A673 (cell line): ENCODE measurements at regions of chr3 and their contacts with region 1.

Region 1: DNA sequence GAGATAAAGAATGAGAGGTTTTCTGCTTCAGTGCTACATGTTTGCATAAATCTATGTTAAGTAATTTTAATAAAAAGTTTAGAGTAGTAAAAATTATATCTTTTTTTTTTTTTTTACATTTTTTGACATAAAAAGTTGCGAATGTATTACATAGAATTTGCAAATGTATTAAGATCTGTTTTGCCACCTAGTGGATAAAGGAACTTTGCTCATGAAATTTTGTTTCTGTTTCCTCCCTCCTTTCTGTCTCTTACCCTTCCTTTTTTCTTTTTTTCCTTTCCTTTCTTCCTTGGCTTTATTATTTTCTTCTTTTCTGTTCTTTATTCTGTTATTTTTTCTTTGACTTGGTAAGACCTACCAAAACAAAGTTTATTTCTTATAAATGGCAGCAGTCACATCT is 58.5 kb upstream of the UTS2B start:
- DNase-seq: no peak
- H3K4me3 ChIP-seq: no peak overlapping the region
- H3K27ac ChIP-seq: no peak overlapping the region
- H3K4me1 ChIP-seq: peaks cover 13% of the 10 kb centered on the region
- H3K27me3 ChIP-seq: no peaks in the 10 kb centered on the region
- CTCF ChIP-seq: peak; percentile 48; the same call in 1 of the 2 replicates

Region 2: DNA sequence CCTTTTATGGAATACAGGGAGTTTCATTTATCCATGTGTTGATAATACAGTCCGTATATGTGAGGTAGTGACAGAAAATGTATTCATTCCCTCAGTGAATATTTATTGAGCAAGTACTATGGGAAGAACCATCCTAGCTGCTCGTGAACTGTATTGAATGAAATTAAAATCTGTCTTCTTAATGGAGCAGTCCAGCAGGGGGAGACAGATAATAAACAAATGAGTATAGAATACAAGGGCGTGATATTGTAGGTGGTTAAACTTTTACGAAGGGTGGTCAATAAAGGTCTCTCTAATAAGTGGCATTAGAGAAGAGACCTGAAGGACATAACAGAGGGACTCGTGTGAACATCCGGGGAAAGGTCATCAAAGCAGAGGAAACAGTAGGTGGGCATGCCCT is 252.5 kb before region 1 on chr3:
- CTCF ChIA-PET with region 1: no interaction called
- POLR2A ChIA-PET with region 1: no interaction called
- intact Hi-C with region 1: loop called (anchors 5 kb)
- DNase-seq: peak; percentile 72
- H3K4me3 ChIP-seq: no peak overlapping the region
- H3K27ac ChIP-seq: no peak overlapping the region
- H3K4me1 ChIP-seq: no peaks in the 10 kb centered on the region
- H3K27me3 ChIP-seq: no peaks in the 10 kb centered on the region
- CTCF ChIP-seq: peak; percentile 72

Region 3: DNA sequence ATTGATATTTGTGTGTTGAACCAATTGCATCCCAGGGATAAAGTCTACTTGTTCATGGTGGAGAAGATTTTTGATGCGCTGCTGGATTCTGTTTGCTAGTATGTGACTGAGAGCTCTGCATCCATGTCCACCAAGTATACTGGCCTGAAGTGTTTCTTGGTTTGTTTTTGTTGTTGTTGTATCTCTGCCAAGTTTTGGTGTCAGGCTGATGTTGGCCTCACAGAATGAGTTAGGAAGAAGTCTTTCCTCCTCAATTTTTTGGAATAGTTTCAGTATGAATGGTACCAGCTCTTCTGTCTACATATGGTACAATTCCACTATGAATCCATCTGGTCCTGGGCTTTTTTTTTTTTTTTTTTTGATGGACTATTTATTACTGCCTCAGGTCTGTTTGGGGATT is 240.7 kb before region 1 on chr3:
- CTCF ChIA-PET with region 1: no interaction called
- POLR2A ChIA-PET with region 1: no interaction called
- intact Hi-C with region 1: no loop called
- DNase-seq: no peak
- H3K4me3 ChIP-seq: no peak overlapping the region
- H3K27ac ChIP-seq: no peak overlapping the region
- H3K4me1 ChIP-seq: no peaks in the 10 kb centered on the region
- H3K27me3 ChIP-seq: no peaks in the 10 kb centered on the region
- CTCF ChIP-seq: no peak

Region 4: DNA sequence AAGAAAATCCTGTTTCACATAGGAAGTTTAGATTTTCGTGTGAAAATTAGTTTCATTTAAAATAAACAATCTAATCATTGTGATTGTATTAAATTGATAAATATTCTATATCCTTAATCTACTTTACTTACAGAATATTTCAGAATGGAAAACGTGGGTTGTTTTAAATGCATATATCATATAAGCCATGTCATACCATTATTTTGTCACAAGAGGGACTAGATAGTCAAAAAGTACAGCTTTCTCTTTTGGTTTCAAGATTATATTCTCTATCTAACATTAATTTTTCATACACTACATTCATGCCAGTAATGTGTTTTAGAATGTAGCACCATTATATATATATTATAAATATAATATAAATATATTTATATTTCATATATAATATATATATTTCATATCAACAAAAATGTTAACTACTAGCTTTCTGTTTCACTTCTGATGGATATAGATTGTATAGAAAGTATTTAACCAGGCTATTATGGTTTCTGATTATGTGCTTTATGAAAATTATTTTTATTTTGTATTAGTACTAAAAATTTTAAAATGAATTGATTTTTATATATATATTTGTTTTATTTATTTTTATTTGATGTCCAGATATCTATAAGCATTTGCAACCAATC is 144.5 kb before region 1 on chr3:
- CTCF ChIA-PET with region 1: interaction called, 3 read pairs
- POLR2A ChIA-PET with region 1: no interaction called
- intact Hi-C with region 1: loop called (anchors 5 kb)
- DNase-seq: peak; percentile 40
- H3K4me3 ChIP-seq: no peak overlapping the region
- H3K27ac ChIP-seq: no peak overlapping the region
- H3K4me1 ChIP-seq: peaks cover 24% of the 10 kb centered on the region
- H3K27me3 ChIP-seq: no peaks in the 10 kb centered on the region
- CTCF ChIP-seq: peak; percentile 62; the same call in 1 of the 2 replicates

Region 5: GRCh38 chr3:191592105-191592504 is 203.3 kb after region 1 on chr3:
- CTCF ChIA-PET with region 1: no interaction called
- POLR2A ChIA-PET with region 1: no interaction called
- intact Hi-C with region 1: no loop called
- DNase-seq: peak; percentile 39
- H3K4me3 ChIP-seq: no peak overlapping the region
- H3K27ac ChIP-seq: no peak overlapping the region
- H3K4me1 ChIP-seq: peaks cover 9% of the 10 kb centered on the region
- H3K27me3 ChIP-seq: no peaks in the 10 kb centered on the region
- CTCF ChIP-seq: no peak